Heart right ventricle (tissue), 16 donors: ENCODE measurements at regions of chrX and their contacts with region 1.

Region 1: GRCh38 chrX:70096052-70096451 is 33.8 kb downstream of the OTUD6A start:
- DNase-seq: no peak
- ATAC-seq: peak in 2 of 8 donors; percentile 46 to 65
- H3K4me3 ChIP-seq: no peak overlapping the region
- H3K27ac ChIP-seq: no peak overlapping the region
- H3K4me1 ChIP-seq: peaks cover 0 to 5% (median 0%) of the 10 kb centered on the region in 9 donors
- H3K27me3 ChIP-seq: peaks cover 0 to 23% (median 0%) of the 10 kb centered on the region in 7 donors
- CTCF ChIP-seq: peak in 5 of 9 donors; percentile 10 to 42 (median 24)

Region 2: GRCh38 chrX:69424161-69424560 is 671.9 kb before region 1 on chrX:
- intact Hi-C with region 1: loop called in 4 of 10 experiments (anchors 10 kb)
- DNase-seq: no peak
- ATAC-seq: no peak
- H3K4me3 ChIP-seq: no peak overlapping the region
- H3K27ac ChIP-seq: no peak overlapping the region
- H3K4me1 ChIP-seq: peaks cover 0 to 2% (median 0%) of the 10 kb centered on the region in 9 donors
- H3K27me3 ChIP-seq: peaks cover 0 to 13% (median 0%) of the 10 kb centered on the region in 7 donors
- CTCF ChIP-seq: peak in 8 of 9 donors; percentile 6 to 51 (median 38)

Region 3: DNA sequence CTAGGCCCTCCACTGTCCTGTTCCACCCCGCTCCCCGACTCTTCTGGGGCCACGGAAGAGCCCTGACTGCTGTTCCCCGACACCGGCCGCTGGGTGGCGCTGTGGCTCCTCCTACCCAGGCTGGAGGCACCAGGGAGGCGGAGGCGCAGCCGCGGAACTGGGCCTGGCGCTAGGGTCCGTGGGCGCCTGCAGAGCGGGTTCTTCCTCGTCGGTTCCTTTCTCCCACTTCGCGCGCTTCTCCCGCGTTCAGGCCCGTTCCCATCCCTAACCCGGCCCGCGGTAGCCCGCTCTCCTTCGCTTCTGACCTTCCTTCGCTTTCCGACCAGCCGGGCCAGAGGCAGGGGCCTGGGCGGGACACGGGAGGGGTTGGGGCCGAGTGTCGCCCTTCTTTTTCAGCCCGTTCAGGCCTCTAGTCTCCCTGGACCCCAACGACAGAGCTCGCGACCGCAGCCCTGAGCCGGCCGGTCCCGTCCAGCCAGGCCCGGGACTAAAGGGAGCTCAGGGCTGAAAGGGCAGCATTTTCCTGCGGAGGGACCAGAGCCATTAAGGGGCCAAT is 557.7 kb before region 1 on chrX:
- intact Hi-C with region 1: loop called in 8 of 10 experiments (anchors 2 to 5 kb)
- DNase-seq: peak; percentile 70 to 83
- ATAC-seq: peak; percentile 95 to 99 (median 96)
- H3K4me3 ChIP-seq: peak overlapping the region in 9 of 10 donors; percentile 27 to 59 (median 54)
- H3K27ac ChIP-seq: peak overlapping the region in 4 of 10 donors; percentile 52 to 71 (median 54)
- H3K4me1 ChIP-seq: peaks cover 0 to 17% (median 3%) of the 10 kb centered on the region in 9 donors
- H3K27me3 ChIP-seq: peaks cover 0 to 34% (median 0%) of the 10 kb centered on the region in 7 donors
- CTCF ChIP-seq: peak; percentile 60 to 83 (median 77)

Region 4: GRCh38 chrX:69627744-69628143 is 468.3 kb before region 1 on chrX:
- intact Hi-C with region 1: loop called in 1 of 10 experiments (anchors 10 kb)
- DNase-seq: no peak
- ATAC-seq: no peak
- H3K4me3 ChIP-seq: no peak overlapping the region
- H3K27ac ChIP-seq: no peak overlapping the region
- H3K4me1 ChIP-seq: no peaks in the 10 kb centered on the region
- H3K27me3 ChIP-seq: no peaks in the 10 kb centered on the region
- CTCF ChIP-seq: no peak

Region 5: DNA sequence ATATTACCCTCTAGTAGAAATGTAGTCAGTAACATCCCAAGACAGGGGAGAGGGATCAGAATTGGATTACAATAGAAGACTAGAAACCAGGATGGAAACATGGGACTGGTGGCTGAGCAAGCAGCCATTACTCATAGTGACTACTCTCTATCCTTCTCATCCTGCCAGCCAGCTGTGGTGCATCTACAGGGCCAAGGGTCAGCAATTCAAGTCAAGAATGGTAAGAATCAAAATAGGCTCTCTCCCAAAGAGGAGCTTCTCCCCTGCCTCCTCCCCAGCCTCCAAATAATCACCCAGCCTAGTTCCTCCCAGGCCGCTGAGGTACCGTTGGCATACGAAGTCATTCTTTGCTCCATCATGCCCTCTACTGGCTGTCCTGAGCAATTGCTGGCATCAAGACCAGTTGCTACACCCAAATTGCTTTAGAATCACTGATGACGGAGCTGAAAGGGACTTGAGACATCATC is 65.7 kb before region 1 on chrX:
- intact Hi-C with region 1: loop called in 8 of 10 experiments (anchors 5 to 10 kb)
- DNase-seq: peak; percentile 11 to 46
- ATAC-seq: peak in 7 of 8 donors; percentile 44 to 74 (median 68)
- H3K4me3 ChIP-seq: no peak overlapping the region
- H3K27ac ChIP-seq: no peak overlapping the region
- H3K4me1 ChIP-seq: peaks cover 0 to 16% (median 0%) of the 10 kb centered on the region in 9 donors
- H3K27me3 ChIP-seq: peaks cover 0 to 48% (median 0%) of the 10 kb centered on the region in 7 donors
- CTCF ChIP-seq: peak; percentile 46 to 79 (median 69)

Region 6: GRCh38 chrX:70525733-70526132 is 429.7 kb after region 1 on chrX:
- intact Hi-C with region 1: no loop called
- DNase-seq: no peak
- ATAC-seq: no peak
- H3K4me3 ChIP-seq: no peak overlapping the region
- H3K27ac ChIP-seq: no peak overlapping the region
- H3K4me1 ChIP-seq: no peaks in the 10 kb centered on the region
- H3K27me3 ChIP-seq: peaks cover 0 to 20% (median 0%) of the 10 kb centered on the region in 7 donors
- CTCF ChIP-seq: no peak